ENCODE measurements at regions of chr1 and their contacts with region 1.

Region 1: GRCh38 chr1:26363549-26364448 is 8.8 kb downstream of the ZNF683 start:
- DNase-seq: peak; percentile 93
- ATAC-seq: peak; percentile 76
- H3K4me3 Mint-ChIP-seq: peak overlapping the region; percentile 58
- H3K27ac Mint-ChIP-seq: peak overlapping the region; percentile 70
- H3K4me1 Mint-ChIP-seq: peaks cover 78% of the 10 kb centered on the region
- H3K27me3 Mint-ChIP-seq: peaks cover 11% of the 10 kb centered on the region

Region 2: DNA sequence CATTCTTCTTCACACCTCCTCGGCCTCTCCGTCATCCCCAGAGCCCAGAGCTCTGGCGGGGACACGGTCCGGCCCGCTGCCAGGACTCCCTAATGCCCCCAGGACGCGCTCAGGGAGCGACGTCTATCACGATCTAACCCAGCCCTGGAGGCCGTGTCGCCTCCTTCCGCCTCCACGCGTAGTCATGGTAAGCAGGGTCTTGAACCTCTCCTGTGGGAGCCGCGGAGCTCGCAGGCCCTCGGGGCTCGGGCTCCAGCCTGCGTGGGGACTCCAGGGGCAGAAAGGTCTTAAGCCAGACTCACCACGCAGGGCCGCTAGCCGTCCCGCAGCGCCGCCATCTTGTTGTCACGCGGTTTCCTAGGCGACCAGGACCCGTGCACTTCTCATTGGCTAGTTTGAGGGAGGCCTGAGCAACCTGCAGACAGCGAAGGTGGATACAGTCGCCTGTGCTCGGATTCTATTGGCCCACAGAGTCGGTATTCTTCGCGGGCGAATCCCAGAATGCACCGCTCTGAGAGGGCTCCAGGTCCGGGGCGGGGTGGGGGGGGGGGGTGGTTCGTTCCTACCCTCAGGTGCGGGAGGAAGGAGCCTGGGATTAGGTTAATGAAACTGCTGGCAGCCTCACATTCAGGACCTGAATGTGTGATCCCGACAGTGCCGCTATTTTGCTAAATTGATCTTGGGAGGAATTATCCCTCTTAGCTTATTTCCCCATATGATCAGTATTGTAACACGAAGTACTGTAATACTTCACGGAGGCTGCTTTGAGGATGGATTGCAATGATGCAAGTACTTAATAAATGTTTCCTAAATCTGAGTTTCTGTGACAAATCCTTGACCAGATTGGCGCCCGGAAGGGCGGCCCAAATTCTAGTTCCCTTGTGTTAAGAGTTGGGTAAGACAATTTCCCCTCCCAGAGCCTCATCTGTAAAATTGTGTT is 57.2 kb before region 1 on chr1 and contains the start of gene UBXN11:
- CTCF ChIA-PET with region 1: interaction called, 12 read pairs
- POLR2A ChIA-PET with region 1: no interaction called
- DNase-seq: peak; percentile 97
- ATAC-seq: peak; percentile 99
- H3K4me3 Mint-ChIP-seq: peak within 1 kb of the TSS; percentile 99
- H3K27ac Mint-ChIP-seq: peak within 1 kb of the TSS; percentile 96
- H3K4me1 Mint-ChIP-seq: peaks cover 38% of the 10 kb centered on the region
- H3K27me3 Mint-ChIP-seq: no peaks in the 10 kb centered on the region
- total RNA-seq, gene UBXN11: 34.4 to 40.9 TPM

Region 3: DNA sequence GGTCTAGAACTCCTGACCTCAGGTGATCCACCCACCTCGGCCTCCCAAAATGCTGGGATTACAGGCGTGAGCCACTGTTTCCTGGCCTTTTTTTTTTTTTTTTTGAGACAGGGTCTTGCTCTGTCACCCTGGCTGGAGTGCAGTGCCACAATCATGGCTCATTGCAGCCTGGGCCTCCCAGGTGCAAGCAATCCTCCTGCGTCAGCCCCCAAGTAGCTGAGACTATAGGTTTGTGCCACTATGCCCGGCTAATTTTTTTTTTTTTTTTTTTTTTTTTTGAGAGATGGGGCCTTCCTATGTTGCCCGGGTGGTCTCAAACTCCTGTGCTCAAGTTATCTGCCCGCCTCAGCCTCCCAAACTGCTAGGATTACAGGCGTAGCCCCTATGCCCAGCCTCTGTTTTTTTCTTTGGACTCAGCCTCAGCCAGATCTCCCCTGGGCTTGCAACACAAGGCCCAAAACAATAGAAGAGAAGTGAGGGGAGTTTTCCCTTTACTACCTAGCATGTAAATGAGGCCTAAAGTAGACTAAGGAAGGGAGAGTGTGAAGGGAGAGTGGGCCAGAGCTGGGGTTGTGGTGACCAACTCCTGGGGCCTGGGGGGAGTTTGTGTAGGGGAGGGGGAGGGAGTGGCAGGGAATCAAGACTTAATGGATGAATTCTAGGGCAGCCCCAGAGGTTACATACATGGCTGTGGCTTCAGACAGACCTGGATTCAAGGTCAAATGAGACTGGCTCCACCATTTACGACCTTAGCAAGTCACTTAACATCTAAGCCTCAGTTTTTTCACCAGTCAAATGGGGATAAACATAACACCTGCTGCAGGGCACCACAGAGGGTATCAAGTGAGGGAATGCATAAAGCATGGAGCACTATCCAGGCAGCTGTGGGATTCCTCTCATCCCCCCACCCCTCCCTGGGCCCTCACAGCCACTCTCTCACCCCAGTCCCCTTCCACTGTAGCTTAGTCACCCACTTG is 47.6 kb before region 1 on chr1:
- CTCF ChIA-PET with region 1: interaction called, 13 read pairs
- POLR2A ChIA-PET with region 1: interaction called, 3 read pairs
- DNase-seq: no peak
- ATAC-seq: no peak
- H3K4me3 Mint-ChIP-seq: peak overlapping the region; percentile 84
- H3K27ac Mint-ChIP-seq: peak overlapping the region; percentile 75
- H3K4me1 Mint-ChIP-seq: peaks cover 61% of the 10 kb centered on the region
- H3K27me3 Mint-ChIP-seq: no peaks in the 10 kb centered on the region

Region 4: GRCh38 chr1:26321315-26322041 is 42.3 kb before region 1 on chr1:
- CTCF ChIA-PET with region 1: interaction called, 14 read pairs
- POLR2A ChIA-PET with region 1: interaction called, 3 read pairs
- DNase-seq: peak; percentile 97
- ATAC-seq: peak; percentile 76
- H3K4me3 Mint-ChIP-seq: peak overlapping the region; percentile 84
- H3K27ac Mint-ChIP-seq: peak overlapping the region; percentile 94
- H3K4me1 Mint-ChIP-seq: peaks cover 49% of the 10 kb centered on the region
- H3K27me3 Mint-ChIP-seq: no peaks in the 10 kb centered on the region

Region 5: DNA sequence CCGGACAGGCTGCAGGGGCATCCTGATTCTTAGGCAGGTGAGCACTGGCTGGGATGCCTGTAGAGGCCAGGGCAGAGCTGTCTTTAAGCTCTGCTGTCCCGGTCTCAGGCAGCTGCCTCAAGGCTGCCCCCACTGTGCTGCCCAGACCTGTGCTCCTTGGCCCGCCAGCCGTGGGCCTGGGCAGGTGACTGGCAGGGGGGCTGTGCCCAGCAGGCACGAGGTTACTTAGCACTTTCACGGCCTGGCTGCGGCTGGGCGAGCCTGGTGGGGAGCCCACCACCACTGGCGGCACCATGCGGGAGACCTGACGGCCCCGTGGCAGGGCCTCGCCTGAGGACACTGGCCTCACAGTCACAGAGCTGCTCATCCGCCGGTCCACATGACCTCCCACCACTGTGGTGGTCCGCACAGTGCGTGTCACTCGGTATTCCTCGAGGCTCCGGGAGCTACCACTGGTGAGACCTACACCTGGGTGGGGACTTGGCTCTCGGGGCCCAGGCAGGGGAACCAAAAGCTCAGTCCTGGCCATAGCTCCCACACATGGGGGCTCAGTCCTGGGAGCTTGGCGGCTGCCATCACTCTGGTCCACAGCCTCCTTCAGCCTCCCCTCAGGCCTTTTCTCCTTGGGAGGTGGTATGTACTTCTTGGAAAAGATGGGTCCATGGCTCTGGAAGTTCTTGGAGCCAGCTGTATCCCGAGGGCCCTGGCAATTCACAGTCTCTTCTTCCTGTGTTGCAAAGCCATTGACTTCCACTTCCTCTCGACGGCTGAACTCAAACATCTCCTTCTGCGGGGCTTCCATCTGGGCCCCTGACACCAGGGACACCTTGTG is 17.9 kb before region 1 on chr1:
- CTCF ChIA-PET with region 1: interaction called, 19 read pairs
- POLR2A ChIA-PET with region 1: no interaction called
- DNase-seq: no peak
- ATAC-seq: no peak
- H3K4me3 Mint-ChIP-seq: no peak overlapping the region
- H3K27ac Mint-ChIP-seq: no peak overlapping the region
- H3K4me1 Mint-ChIP-seq: peaks cover 3% of the 10 kb centered on the region
- H3K27me3 Mint-ChIP-seq: peaks cover 5% of the 10 kb centered on the region

Region 6: GRCh38 chr1:26378088-26378878 is 14.5 kb after region 1 on chr1:
- CTCF ChIA-PET with region 1: interaction called, 160 read pairs
- POLR2A ChIA-PET with region 1: interaction called, 7 read pairs
- DNase-seq: peak; percentile 93
- ATAC-seq: peak; percentile 95
- H3K4me3 Mint-ChIP-seq: peak overlapping the region; percentile 58
- H3K27ac Mint-ChIP-seq: peak overlapping the region; percentile 97
- H3K4me1 Mint-ChIP-seq: peaks cover 81% of the 10 kb centered on the region
- H3K27me3 Mint-ChIP-seq: no peaks in the 10 kb centered on the region

Region 7: GRCh38 chr1:26391450-26391849 is 27.7 kb after region 1 on chr1:
- CTCF ChIA-PET with region 1: interaction called, 59 read pairs
- POLR2A ChIA-PET with region 1: interaction called, 3 read pairs
- DNase-seq: peak; percentile 78
- ATAC-seq: peak; percentile 73
- H3K4me3 Mint-ChIP-seq: no peak overlapping the region
- H3K27ac Mint-ChIP-seq: peak overlapping the region; percentile 35
- H3K4me1 Mint-ChIP-seq: peaks cover 61% of the 10 kb centered on the region
- H3K27me3 Mint-ChIP-seq: peaks cover 3% of the 10 kb centered on the region

Measured in activated CD8-positive, alpha-beta T cell treated with anti-CD3 and anti-CD28 coated beads, Interleukin-2, amount 10 ng/mL, durations not matched to agents 7 days and 5 days (primary cell).